ENCODE measurements at regions of chr11 and their contacts with region 1.

Region 1: DNA sequence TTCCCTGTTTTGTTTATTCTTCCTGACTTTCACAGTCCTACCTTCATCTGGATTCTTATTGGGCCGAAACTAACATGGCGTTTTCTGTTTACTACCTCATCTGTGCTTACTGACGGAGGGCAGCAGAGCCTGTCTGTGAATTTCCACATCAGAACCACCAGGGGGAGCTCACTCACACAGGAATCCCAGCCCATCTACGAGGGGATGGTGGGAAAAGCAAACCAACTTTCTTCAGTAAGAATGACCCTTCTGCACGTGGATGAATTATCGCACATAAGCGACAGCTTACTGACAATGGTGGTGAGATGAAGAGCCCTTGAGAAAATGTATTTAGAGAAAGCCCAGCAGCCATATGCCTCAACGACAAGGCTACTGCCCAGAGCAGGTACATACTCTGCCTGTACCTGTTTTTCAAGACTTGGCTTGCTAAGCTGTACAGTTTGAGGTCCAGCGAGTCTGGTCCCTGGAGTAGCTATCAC is 42.5 kb downstream of the LARGE2 start:
- DNase-seq: no peak
- H3K4me3 ChIP-seq: no peak overlapping the region
- CTCF ChIP-seq: peak; percentile 88

Region 2: GRCh38 chr11:45859661-45860140 is 105.2 kb before region 1 on chr11:
- CTCF ChIA-PET with region 1: interaction called, 16 read pairs
- POLR2A ChIA-PET with region 1: no interaction called
- DNase-seq: peak; percentile 99
- H3K4me3 ChIP-seq: no peak overlapping the region
- CTCF ChIP-seq: no peak

Region 3: GRCh38 chr11:45930031-45930794 is 34.7 kb before region 1 on chr11:
- CTCF ChIA-PET with region 1: interaction called, 28 read pairs
- POLR2A ChIA-PET with region 1: no interaction called
- DNase-seq: no peak
- H3K4me3 ChIP-seq: no peak overlapping the region
- CTCF ChIP-seq: no peak

Region 4: GRCh38 chr11:45949992-45950407 is 14.9 kb before region 1 on chr11:
- CTCF ChIA-PET with region 1: interaction called, 122 read pairs
- POLR2A ChIA-PET with region 1: no interaction called
- DNase-seq: no peak
- H3K4me3 ChIP-seq: no peak overlapping the region
- CTCF ChIP-seq: no peak

Region 5: GRCh38 chr11:45993531-45994001 is 28.6 kb after region 1 on chr11:
- CTCF ChIA-PET with region 1: interaction called, 143 read pairs
- POLR2A ChIA-PET with region 1: no interaction called
- DNase-seq: no peak
- H3K4me3 ChIP-seq: no peak overlapping the region
- CTCF ChIP-seq: no peak

Region 6: GRCh38 chr11:46017341-46017740 is 52.4 kb after region 1 on chr11:
- CTCF ChIA-PET with region 1: interaction called, 332 read pairs
- POLR2A ChIA-PET with region 1: no interaction called
- DNase-seq: no peak
- H3K4me3 ChIP-seq: no peak overlapping the region
- CTCF ChIP-seq: no peak

Region 7: GRCh38 chr11:46045811-46046210 is 80.9 kb after region 1 on chr11:
- CTCF ChIA-PET with region 1: interaction called, 15 read pairs
- POLR2A ChIA-PET with region 1: no interaction called
- DNase-seq: no peak
- H3K4me3 ChIP-seq: no peak overlapping the region
- CTCF ChIP-seq: no peak